Activated CD4-positive, alpha-beta T cell treated with anti-CD3 and anti-CD28 coated beads for 36 hours (primary cell): ENCODE measurements at regions of chr17 and their contacts with region 1.

Region 1: GRCh38 chr17:9522074-9522473 is 53.5 kb downstream of the STX8 start:
- DNase-seq: peak; percentile 14
- ATAC-seq: no peak
- H3K4me3 Mint-ChIP-seq: no peak overlapping the region
- H3K27ac Mint-ChIP-seq: no peak overlapping the region
- H3K4me1 Mint-ChIP-seq: peaks cover 13% of the 10 kb centered on the region
- H3K27me3 Mint-ChIP-seq: no peaks in the 10 kb centered on the region

Region 2: DNA sequence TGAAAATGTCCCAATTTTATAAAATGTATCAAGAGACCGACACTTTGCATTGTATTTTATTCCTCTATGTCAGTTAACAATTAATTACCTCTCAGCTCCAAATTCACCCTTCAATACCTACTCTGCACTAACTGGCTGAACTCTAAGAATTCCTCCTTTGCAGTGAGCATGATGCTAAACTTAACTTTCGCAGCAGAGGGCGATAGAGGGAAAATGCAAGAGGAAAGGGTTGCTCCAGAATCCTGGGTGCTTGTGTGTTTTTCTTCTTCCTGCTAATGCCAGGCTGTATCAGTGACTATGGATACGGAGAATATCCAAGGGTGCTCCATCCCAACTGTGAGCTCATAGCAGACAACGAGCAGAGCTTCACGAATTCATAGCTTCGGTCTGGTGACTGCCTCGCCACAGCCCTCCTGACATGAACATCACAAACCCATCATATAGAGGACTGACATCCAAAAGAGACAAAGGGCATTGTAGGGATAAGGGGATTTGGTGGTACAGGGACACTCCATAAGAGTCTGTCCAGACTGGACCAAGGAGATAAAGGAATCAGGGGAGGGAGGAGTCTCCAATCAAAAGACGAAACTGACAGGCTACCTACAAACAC is 119.4 kb before region 1 on chr17:
- CTCF ChIA-PET with region 1: interaction called, 3 read pairs
- POLR2A ChIA-PET with region 1: no interaction called
- intact Hi-C with region 1: loop called (anchors 2 to 5 kb)
- DNase-seq: peak; percentile 56
- ATAC-seq: peak; percentile 47
- H3K4me3 Mint-ChIP-seq: no peak overlapping the region
- H3K27ac Mint-ChIP-seq: no peak overlapping the region
- H3K4me1 Mint-ChIP-seq: no peaks in the 10 kb centered on the region
- H3K27me3 Mint-ChIP-seq: no peaks in the 10 kb centered on the region

Region 3: DNA sequence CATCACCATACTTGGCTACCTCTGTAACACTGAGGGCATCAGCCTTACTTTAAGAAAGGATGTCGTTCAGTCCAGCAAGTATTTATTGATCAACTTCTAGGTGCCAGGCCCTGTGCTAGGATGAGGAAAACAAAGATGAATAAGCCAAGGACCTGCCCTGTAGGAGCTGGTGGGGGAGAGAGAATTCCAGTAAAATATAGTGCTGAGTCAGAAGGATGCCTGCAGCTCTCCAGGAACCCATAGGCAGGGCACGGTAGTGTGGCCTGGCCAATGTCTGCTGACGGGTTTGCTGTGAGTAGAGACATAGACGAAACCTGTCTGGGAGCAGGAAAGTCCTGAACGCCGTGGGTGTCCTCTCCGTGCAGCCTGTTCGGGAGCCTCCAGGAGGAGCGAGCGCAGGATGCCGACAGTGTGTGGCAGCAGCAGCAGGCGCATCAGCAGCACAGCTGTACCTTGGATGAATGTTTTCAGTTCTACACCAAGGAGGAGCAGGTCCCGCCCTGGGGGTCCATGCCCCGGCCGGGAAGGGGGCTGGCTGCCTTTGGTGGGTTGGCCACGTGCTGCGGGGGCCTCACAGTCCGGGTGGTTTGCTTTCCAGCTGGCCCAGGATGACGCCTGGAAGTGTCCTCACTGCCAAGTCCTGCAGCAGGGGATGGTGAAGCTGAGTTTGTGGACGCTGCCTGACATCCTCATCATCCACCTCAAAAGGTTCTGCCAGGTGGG is 178.8 kb after region 1 on chr17:
- CTCF ChIA-PET with region 1: no interaction called
- POLR2A ChIA-PET with region 1: no interaction called
- intact Hi-C with region 1: no loop called
- DNase-seq: no peak
- ATAC-seq: no peak
- H3K4me3 Mint-ChIP-seq: no peak overlapping the region
- H3K27ac Mint-ChIP-seq: no peak overlapping the region
- H3K4me1 Mint-ChIP-seq: no peaks in the 10 kb centered on the region
- H3K27me3 Mint-ChIP-seq: no peaks in the 10 kb centered on the region